HCT116 (cell line): ENCODE measurements at regions of chr2 and their contacts with region 1.

Region 1: GRCh38 chr2:47334356-47335136 is 68.4 kb upstream of the MSH2 start:
- DNase-seq: no peak
- ATAC-seq: peak; percentile 33; the same call in 1 of the 2 replicates
- H3K4me3 ChIP-seq: no peak overlapping the region
- H3K27ac ChIP-seq: no peak overlapping the region
- H3K4me1 ChIP-seq: peaks cover 5 to 31% of the 10 kb centered on the region in 2 experiments
- H3K27me3 ChIP-seq: no peaks in the 10 kb centered on the region
- CTCF ChIP-seq: no peak
- POLR2A ChIP-seq: no peak
- RAD21 ChIP-seq: no peak

Region 2: GRCh38 chr2:47323009-47323821 is 11.3 kb before region 1 on chr2:
- CTCF ChIA-PET with region 1: interaction called, 13 read pairs
- POLR2A ChIA-PET with region 1: no interaction called
- RAD21 ChIA-PET with region 1: interaction called in 1 of 2 experiments, 4 read pairs
- intact Hi-C with region 1: no loop called
- DNase-seq: peak; percentile 57
- ATAC-seq: peak; percentile 98
- H3K4me3 ChIP-seq: no peak overlapping the region
- H3K27ac ChIP-seq: no peak overlapping the region
- H3K4me1 ChIP-seq: peaks cover 3 to 11% of the 10 kb centered on the region in 2 experiments; a peak in 3 of 4 replicates
- H3K27me3 ChIP-seq: no peaks in the 10 kb centered on the region
- CTCF ChIP-seq: peak; percentile 94 to 97 (median 97)
- POLR2A ChIP-seq: no peak
- RAD21 ChIP-seq: peak; percentile 100

Region 3: DNA sequence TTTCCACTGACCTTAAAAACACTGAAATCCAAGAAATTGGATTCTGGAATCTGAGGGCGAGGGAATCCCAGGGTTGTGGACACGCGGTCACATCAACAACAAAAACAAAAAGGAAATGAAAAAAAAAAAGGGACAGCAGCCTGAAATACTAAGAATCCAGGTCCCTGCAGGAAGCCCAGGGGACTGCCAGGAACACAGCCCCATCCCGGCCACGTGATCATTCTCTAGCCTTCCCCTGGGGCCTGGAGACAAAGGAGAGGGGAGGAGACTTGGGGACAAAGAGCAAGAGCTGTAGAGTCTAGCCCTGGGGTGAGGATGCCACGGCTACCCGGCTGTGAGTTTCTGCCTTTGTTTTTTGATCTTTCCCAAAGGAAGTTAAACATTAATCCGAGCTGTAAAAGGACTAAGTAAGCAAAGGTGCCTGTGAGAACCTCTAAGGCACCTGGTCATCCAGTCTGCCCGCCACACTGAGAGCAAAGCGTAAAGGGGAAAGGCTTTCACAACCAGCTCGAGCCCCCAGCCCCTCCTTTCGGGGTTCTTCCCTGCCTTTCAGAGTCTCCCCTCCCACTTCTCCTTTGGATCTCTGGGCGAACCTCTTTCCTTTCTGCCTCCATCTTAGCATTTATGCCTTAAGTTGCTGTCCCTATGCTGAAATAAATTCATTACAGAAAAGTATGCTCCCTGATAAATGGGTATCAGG is 10.5 kb after region 1 on chr2:
- CTCF ChIA-PET with region 1: interaction called, 18 read pairs
- POLR2A ChIA-PET with region 1: interaction called, 4 read pairs
- RAD21 ChIA-PET with region 1: interaction called, 3 to 10 read pairs
- intact Hi-C with region 1: no loop called
- DNase-seq: peak; percentile 86
- ATAC-seq: peak; percentile 96
- H3K4me3 ChIP-seq: peak overlapping the region; percentile 44 to 56
- H3K27ac ChIP-seq: peak overlapping the region; percentile 86
- H3K4me1 ChIP-seq: peaks cover 51 to 66% of the 10 kb centered on the region in 2 experiments
- H3K27me3 ChIP-seq: no peaks in the 10 kb centered on the region
- CTCF ChIP-seq: peak in 1 of 3 experiments; percentile 27; a peak in 1 of 6 replicates
- POLR2A ChIP-seq: peak; percentile 50
- RAD21 ChIP-seq: no peak

Region 4: DNA sequence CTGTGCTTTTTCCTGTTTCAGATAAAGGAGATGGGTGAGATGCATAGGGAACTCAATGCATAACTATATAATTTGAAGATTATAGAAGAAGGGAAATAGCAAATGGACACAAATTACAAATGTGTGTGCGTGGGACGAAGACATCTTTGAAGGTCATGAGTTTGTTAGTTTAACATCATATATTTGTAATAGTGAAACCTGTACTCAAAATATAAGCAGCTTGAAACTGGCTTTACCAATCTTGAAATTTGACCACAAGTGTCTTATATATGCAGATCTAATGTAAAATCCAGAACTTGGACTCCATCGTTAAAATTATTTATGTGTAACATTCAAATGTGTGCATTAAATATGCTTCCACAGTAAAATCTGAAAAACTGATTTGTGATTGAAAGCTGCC is 52.0 kb after region 1 on chr2:
- CTCF ChIA-PET with region 1: interaction called, 134 read pairs
- POLR2A ChIA-PET with region 1: interaction called, 7 read pairs
- RAD21 ChIA-PET with region 1: interaction called, 26 to 53 read pairs
- intact Hi-C with region 1: loop called (anchors 1 kb)
- DNase-seq: no peak
- ATAC-seq: no peak
- H3K4me3 ChIP-seq: no peak overlapping the region
- H3K27ac ChIP-seq: no peak overlapping the region
- H3K4me1 ChIP-seq: no peaks in the 10 kb centered on the region
- H3K27me3 ChIP-seq: no peaks in the 10 kb centered on the region
- CTCF ChIP-seq: no peak
- POLR2A ChIP-seq: no peak
- RAD21 ChIP-seq: no peak

Region 5: GRCh38 chr2:47402805-47403608 is 68.5 kb after region 1 on chr2 and contains the start of gene MSH2:
- CTCF ChIA-PET with region 1: interaction called, 11 read pairs
- POLR2A ChIA-PET with region 1: interaction called, 3 read pairs
- RAD21 ChIA-PET with region 1: no interaction called
- intact Hi-C with region 1: loop called (anchors 5 kb)
- DNase-seq: peak; percentile 80
- ATAC-seq: peak; percentile 92
- H3K4me3 ChIP-seq: peak within 1 kb of the TSS; percentile 80 to 86
- H3K27ac ChIP-seq: peak within 1 kb of the TSS; percentile 76
- H3K4me1 ChIP-seq: peaks cover 13 to 25% of the 10 kb centered on the region in 2 experiments; a peak in 3 of 4 replicates
- H3K27me3 ChIP-seq: no peaks in the 10 kb centered on the region
- CTCF ChIP-seq: no peak
- POLR2A ChIP-seq: peak; percentile 59
- RAD21 ChIP-seq: no peak
- total RNA-seq, gene MSH2: 54.9 TPM